Ascending aorta (tissue), 2 donors: ENCODE measurements at regions of chr18 and their contacts with region 1.

Region 1: DNA sequence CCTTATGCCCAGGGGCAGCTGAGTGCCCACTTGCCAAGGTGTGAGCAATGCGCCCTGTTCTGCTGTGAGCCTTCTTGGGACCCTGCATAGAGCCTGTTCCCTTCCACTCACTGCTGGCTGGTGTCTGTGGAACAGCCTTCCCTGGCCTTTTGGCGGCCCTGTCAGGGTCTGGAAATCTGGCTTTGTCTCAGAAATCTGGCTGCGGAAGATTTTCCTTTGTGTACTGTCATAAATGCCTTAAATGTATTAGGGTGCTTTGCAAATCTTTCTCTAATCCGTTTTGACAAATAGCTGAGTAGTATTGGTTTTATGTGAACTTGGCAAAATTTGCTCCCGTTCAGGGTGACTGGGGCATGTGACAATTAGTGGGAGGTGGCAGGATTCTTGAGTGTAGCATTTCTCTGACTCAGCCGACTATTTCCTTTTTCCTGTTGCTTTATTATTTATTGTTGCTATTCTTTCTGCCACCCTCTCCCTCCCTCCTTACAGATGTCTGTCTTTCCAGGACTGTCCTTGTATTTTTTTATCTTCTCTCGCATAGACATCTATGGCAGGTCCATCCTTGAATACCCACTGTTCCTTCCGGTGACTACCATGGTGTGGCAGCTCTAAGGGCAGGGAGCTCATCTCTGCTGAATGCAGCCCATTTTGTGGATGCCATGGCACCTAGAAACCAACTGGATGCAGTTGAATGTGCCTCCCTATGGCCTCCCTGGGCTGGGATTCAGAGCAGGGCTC is 41.8 kb downstream of the LDLRAD4 start:
- DNase-seq: peak in 1 of 2 donors; percentile 72
- H3K4me3 ChIP-seq: peak overlapping the region; percentile 5 to 19
- H3K27ac ChIP-seq: peak overlapping the region; percentile 85 to 88
- H3K4me1 ChIP-seq: peaks cover 24 to 60% of the 10 kb centered on the region in 2 donors
- H3K27me3 ChIP-seq: no peaks in the 10 kb centered on the region
- CTCF ChIP-seq: no peak

Region 2: GRCh38 chr18:12552884-12553242 is 707.5 kb before region 1 on chr18:
- intact Hi-C with region 1: no loop called
- DNase-seq: no peak
- H3K4me3 ChIP-seq: no peak overlapping the region
- H3K27ac ChIP-seq: no peak overlapping the region
- H3K4me1 ChIP-seq: peaks cover 0 to 7% of the 10 kb centered on the region in 2 donors
- H3K27me3 ChIP-seq: no peaks in the 10 kb centered on the region
- CTCF ChIP-seq: no peak

Region 3: GRCh38 chr18:13112982-13113381 is 147.4 kb before region 1 on chr18:
- intact Hi-C with region 1: no loop called
- DNase-seq: no peak
- H3K4me3 ChIP-seq: no peak overlapping the region
- H3K27ac ChIP-seq: no peak overlapping the region
- H3K4me1 ChIP-seq: no peaks in the 10 kb centered on the region
- H3K27me3 ChIP-seq: no peaks in the 10 kb centered on the region
- CTCF ChIP-seq: peak in 1 of 3 experiments; percentile 33

Region 4: GRCh38 chr18:13375302-13376255 is 115.2 kb after region 1 on chr18:
- intact Hi-C with region 1: loop called (anchors 2 kb)
- DNase-seq: peak; percentile 64 to 93
- H3K4me3 ChIP-seq: peak overlapping the region in 1 of 2 donors; percentile 9
- H3K27ac ChIP-seq: peak overlapping the region; percentile 69 to 73
- H3K4me1 ChIP-seq: peaks cover 6 to 37% of the 10 kb centered on the region in 2 donors
- H3K27me3 ChIP-seq: no peaks in the 10 kb centered on the region
- CTCF ChIP-seq: peak; percentile 9 to 18 (median 9)

Region 5: DNA sequence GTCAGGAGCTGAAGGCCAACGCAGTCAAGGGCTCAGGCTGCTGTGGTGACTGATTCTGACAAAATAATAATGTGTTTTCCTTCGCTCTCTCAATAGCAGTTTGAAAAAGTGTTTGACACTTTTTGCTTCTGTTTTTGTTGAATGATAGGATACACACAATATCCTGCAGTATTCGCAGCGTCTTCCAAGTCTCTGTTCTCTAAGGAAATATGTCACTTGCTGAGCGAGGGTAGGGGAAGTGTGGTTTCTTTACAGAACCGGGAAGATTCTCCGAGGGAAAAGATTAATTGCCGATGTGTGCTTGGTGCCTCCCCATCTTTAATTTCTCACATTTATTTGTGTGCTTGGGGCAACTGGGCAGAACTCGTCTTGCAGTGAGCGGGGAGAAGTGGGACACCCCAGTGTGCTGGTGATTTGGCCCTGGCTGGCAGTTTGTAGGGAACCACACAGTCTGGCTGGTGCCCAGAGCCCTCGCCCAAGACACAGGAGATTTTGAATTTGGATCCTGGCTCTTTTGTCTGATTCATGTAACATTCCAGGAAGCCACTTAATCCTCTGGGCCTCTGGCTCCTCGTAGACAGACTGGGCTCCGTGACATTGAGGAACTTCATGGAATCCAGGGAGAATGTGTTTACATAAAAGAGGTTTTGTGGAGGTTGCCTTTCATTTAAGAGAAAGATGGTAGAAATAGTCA is 127.6 kb after region 1 on chr18:
- intact Hi-C with region 1: no loop called
- DNase-seq: peak in 1 of 2 donors; percentile 73
- H3K4me3 ChIP-seq: no peak overlapping the region
- H3K27ac ChIP-seq: peak overlapping the region; percentile 42 to 67
- H3K4me1 ChIP-seq: peaks cover 3 to 31% of the 10 kb centered on the region in 2 donors
- H3K27me3 ChIP-seq: no peaks in the 10 kb centered on the region
- CTCF ChIP-seq: no peak

Region 6: GRCh38 chr18:13735681-13736080 is 475.3 kb after region 1 on chr18:
- intact Hi-C with region 1: no loop called
- DNase-seq: no peak
- H3K4me3 ChIP-seq: no peak overlapping the region
- H3K27ac ChIP-seq: no peak overlapping the region
- H3K4me1 ChIP-seq: peaks cover 0 to 2% of the 10 kb centered on the region in 2 donors
- H3K27me3 ChIP-seq: no peaks in the 10 kb centered on the region
- CTCF ChIP-seq: no peak